ENCODE measurements at regions of chr11 and their contacts with region 1.

Region 1: DNA sequence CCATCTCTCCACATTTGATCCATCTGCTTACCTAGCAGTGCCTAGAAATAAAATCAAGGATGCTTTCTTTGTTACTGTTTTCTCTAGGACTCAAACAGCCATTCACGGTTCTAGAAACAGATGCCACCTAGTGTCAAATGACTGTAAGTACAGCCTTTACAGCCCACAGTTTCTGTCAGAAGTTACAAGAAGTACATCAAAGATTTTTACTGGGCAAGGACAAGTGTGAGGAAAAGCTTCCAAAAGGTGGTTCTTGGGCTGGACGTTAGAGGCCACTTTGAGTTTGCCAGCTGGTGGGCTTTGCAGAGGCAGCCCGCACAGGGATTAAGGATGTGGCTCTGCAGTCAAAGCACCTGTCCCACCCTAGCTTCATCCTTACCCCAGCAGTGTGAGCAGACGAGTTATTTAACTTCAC is 6.9 kb downstream of the KMT5B start:
- DNase-seq: peak in 3 of 14 experiments; percentile 63 to 76 (median 75)
- ATAC-seq: peak; percentile 67
- H3K4me3 ChIP-seq: no peak overlapping the region
- H3K4me3 Mint-ChIP-seq: peak overlapping the region; percentile 34
- H3K27ac ChIP-seq: no peak overlapping the region
- H3K27ac Mint-ChIP-seq: peak overlapping the region; percentile 25
- H3K4me1 ChIP-seq: peaks cover 57% of the 10 kb centered on the region
- H3K4me1 Mint-ChIP-seq: peaks cover 71% of the 10 kb centered on the region
- H3K27me3 ChIP-seq: no peaks in the 10 kb centered on the region
- H3K27me3 Mint-ChIP-seq: no peaks in the 10 kb centered on the region
- CTCF ChIP-seq: peak; percentile 74

Region 2: GRCh38 chr11:67317205-67317887 is 888.8 kb before region 1 on chr11:
- CTCF ChIA-PET with region 1: no interaction called
- POLR2A ChIA-PET with region 1: no interaction called
- intact Hi-C with region 1: no loop called
- DNase-seq: peak; percentile 96 to 99 (median 98)
- ATAC-seq: peak; percentile 78
- H3K4me3 ChIP-seq: peak overlapping the region; percentile 82
- H3K4me3 Mint-ChIP-seq: peak overlapping the region; percentile 99
- H3K27ac ChIP-seq: peak overlapping the region; percentile 46 to 70
- H3K27ac Mint-ChIP-seq: peak overlapping the region; percentile 85
- H3K4me1 ChIP-seq: peaks cover 42% of the 10 kb centered on the region
- H3K4me1 Mint-ChIP-seq: peaks cover 54% of the 10 kb centered on the region
- H3K27me3 ChIP-seq: no peaks in the 10 kb centered on the region
- H3K27me3 Mint-ChIP-seq: no peaks in the 10 kb centered on the region
- CTCF ChIP-seq: peak; percentile 88

Region 3: GRCh38 chr11:68003846-68004550 is 202.2 kb before region 1 on chr11 and contains the start of gene UNC93B1:
- CTCF ChIA-PET with region 1: no interaction called
- POLR2A ChIA-PET with region 1: no interaction called
- intact Hi-C with region 1: loop called (anchors 5 to 10 kb)
- DNase-seq: peak; percentile 58 to 90 (median 74)
- ATAC-seq: peak; percentile 77
- H3K4me3 ChIP-seq: peak within 1 kb of the TSS; percentile 53
- H3K4me3 Mint-ChIP-seq: peak within 1 kb of the TSS; percentile 90
- H3K27ac ChIP-seq: peak within 1 kb of the TSS; percentile 10 to 15
- H3K27ac Mint-ChIP-seq: peak within 1 kb of the TSS; percentile 76
- H3K4me1 ChIP-seq: peaks cover 32% of the 10 kb centered on the region
- H3K4me1 Mint-ChIP-seq: peaks cover 25% of the 10 kb centered on the region
- H3K27me3 ChIP-seq: no peaks in the 10 kb centered on the region
- H3K27me3 Mint-ChIP-seq: no peaks in the 10 kb centered on the region
- CTCF ChIP-seq: no peak
- total RNA-seq, gene UNC93B1: 21.3 to 22.0 TPM

Region 4: GRCh38 chr11:68009391-68010089 is 196.7 kb before region 1 on chr11:
- CTCF ChIA-PET with region 1: no interaction called
- POLR2A ChIA-PET with region 1: no interaction called
- intact Hi-C with region 1: loop called (anchors 5 to 10 kb)
- DNase-seq: peak in 2 of 14 experiments; percentile 20 to 27
- ATAC-seq: no peak
- H3K4me3 ChIP-seq: no peak overlapping the region
- H3K4me3 Mint-ChIP-seq: no peak overlapping the region
- H3K27ac ChIP-seq: no peak overlapping the region
- H3K27ac Mint-ChIP-seq: peak overlapping the region; percentile 64
- H3K4me1 ChIP-seq: peaks cover 8% of the 10 kb centered on the region
- H3K4me1 Mint-ChIP-seq: peaks cover 14% of the 10 kb centered on the region
- H3K27me3 ChIP-seq: no peaks in the 10 kb centered on the region
- H3K27me3 Mint-ChIP-seq: peaks cover 7% of the 10 kb centered on the region
- CTCF ChIP-seq: no peak

Region 5: DNA sequence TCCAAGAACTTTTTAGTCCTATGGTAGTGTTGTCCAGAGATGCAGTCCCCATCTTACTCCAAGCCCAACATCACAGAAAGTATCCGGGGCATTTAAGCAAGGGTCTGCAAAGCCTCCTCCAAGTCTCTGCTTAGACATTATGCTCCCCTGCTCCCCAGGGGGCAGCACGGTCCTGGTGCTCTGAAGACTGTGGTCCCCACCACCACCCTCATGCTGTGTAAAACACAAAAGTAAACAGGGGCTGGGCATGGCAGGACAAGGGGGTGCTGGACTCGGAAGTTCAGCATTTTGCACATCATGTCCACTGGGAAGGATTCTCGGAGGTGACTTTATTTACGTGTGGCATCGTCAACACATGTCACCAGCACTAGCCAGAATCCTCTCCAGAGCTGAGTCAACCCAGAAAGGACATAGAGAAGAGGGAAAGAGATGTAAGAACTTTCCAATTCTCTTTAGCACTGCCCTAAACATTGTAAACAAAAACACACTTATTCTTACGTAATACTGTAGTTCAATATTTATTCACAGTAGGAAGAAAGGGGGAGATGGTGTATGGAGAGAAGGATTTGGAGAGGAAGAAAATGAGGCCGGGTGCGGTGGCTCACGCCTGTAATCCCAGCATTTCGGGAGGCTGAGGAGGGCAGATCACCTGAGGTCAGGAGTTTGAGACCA is 129.7 kb before region 1 on chr11:
- CTCF ChIA-PET with region 1: no interaction called
- POLR2A ChIA-PET with region 1: no interaction called
- intact Hi-C with region 1: loop called in 1 of 2 experiments (anchors 1 kb)
- DNase-seq: peak in 1 of 14 experiments; percentile 18
- ATAC-seq: no peak
- H3K4me3 ChIP-seq: no peak overlapping the region
- H3K4me3 Mint-ChIP-seq: no peak overlapping the region
- H3K27ac ChIP-seq: no peak overlapping the region
- H3K27ac Mint-ChIP-seq: no peak overlapping the region
- H3K4me1 ChIP-seq: no peaks in the 10 kb centered on the region
- H3K4me1 Mint-ChIP-seq: no peaks in the 10 kb centered on the region
- H3K27me3 ChIP-seq: no peaks in the 10 kb centered on the region
- H3K27me3 Mint-ChIP-seq: no peaks in the 10 kb centered on the region
- CTCF ChIP-seq: no peak

Region 6: DNA sequence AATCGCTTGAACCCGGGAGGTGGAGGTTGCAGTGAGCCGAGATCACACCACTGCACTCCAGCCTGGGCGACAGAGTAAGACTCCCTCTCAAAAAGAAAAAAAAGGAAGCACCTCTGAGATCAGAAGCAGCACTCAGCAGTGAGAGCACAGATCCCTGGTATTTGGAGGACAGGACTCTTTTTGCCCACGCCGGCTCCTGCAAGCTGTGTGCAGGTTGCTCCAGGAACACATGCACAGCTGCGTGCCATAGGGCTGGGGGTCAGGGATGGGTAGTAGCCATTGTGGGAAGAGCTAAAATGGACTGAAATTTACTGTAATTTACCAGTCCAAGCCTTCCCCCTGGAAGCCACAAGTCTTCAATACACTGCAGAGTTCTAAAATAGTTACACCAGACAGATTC is 29.5 kb after region 1 on chr11:
- CTCF ChIA-PET with region 1: no interaction called
- POLR2A ChIA-PET with region 1: no interaction called
- intact Hi-C with region 1: no loop called
- DNase-seq: no peak
- ATAC-seq: no peak
- H3K4me3 ChIP-seq: no peak overlapping the region
- H3K4me3 Mint-ChIP-seq: no peak overlapping the region
- H3K27ac ChIP-seq: no peak overlapping the region
- H3K27ac Mint-ChIP-seq: no peak overlapping the region
- H3K4me1 ChIP-seq: no peaks in the 10 kb centered on the region
- H3K4me1 Mint-ChIP-seq: no peaks in the 10 kb centered on the region
- H3K27me3 ChIP-seq: peaks cover 0 to 6% of the 10 kb centered on the region in 2 experiments
- H3K27me3 Mint-ChIP-seq: peaks cover 16% of the 10 kb centered on the region
- CTCF ChIP-seq: no peak

Region 7: GRCh38 chr11:68282141-68282970 is 76.2 kb after region 1 on chr11:
- CTCF ChIA-PET with region 1: no interaction called
- POLR2A ChIA-PET with region 1: no interaction called
- intact Hi-C with region 1: no loop called
- DNase-seq: peak in 6 of 14 experiments; percentile 23 to 54 (median 40)
- ATAC-seq: peak; percentile 26
- H3K4me3 ChIP-seq: peak overlapping the region; percentile 11
- H3K4me3 Mint-ChIP-seq: peak overlapping the region; percentile 44
- H3K27ac ChIP-seq: no peak overlapping the region
- H3K27ac Mint-ChIP-seq: no peak overlapping the region
- H3K4me1 ChIP-seq: peaks cover 12% of the 10 kb centered on the region
- H3K4me1 Mint-ChIP-seq: peaks cover 20% of the 10 kb centered on the region
- H3K27me3 ChIP-seq: peaks cover 0 to 2% of the 10 kb centered on the region in 2 experiments
- H3K27me3 Mint-ChIP-seq: peaks cover 8% of the 10 kb centered on the region
- CTCF ChIP-seq: no peak

Measured in CD4-positive, alpha-beta T cell (primary cell).